Mammary epithelial cell (primary cell): ENCODE measurements at regions of chr5 and their contacts with region 1.

Region 1: GRCh38 chr5:73298772-73299630 is 126.0 kb downstream of the TMEM174 start:
- DNase-seq: peak; percentile 22
- H3K4me3 ChIP-seq: no peak overlapping the region
- H3K27ac ChIP-seq: no peak overlapping the region
- H3K4me1 ChIP-seq: peaks cover 14% of the 10 kb centered on the region
- H3K27me3 ChIP-seq: peaks cover 38% of the 10 kb centered on the region
- CTCF ChIP-seq: no peak

Region 2: GRCh38 chr5:73081093-73081492 is 217.9 kb before region 1 on chr5:
- CTCF ChIA-PET with region 1: no interaction called
- dilution Hi-C with region 1: no loop called
- in situ Hi-C with region 1: no loop called
- intact Hi-C with region 1: loop called (anchors 5 kb)
- DNase-seq: no peak
- H3K4me3 ChIP-seq: no peak overlapping the region
- H3K27ac ChIP-seq: no peak overlapping the region
- H3K4me1 ChIP-seq: no peaks in the 10 kb centered on the region
- H3K27me3 ChIP-seq: no peaks in the 10 kb centered on the region
- CTCF ChIP-seq: no peak

Region 3: GRCh38 chr5:73233347-73234200 is 65.4 kb before region 1 on chr5:
- CTCF ChIA-PET with region 1: no interaction called
- dilution Hi-C with region 1: loop called (anchors 10 kb)
- in situ Hi-C with region 1: no loop called
- intact Hi-C with region 1: no loop called
- DNase-seq: no peak
- H3K4me3 ChIP-seq: no peak overlapping the region
- H3K27ac ChIP-seq: no peak overlapping the region
- H3K4me1 ChIP-seq: peaks cover 28% of the 10 kb centered on the region
- H3K27me3 ChIP-seq: no peaks in the 10 kb centered on the region
- CTCF ChIP-seq: no peak